Ascending aorta (tissue), 2 donors: ENCODE measurements at regions of chr3 and their contacts with region 1.

Region 1: GRCh38 chr3:185070491-185071286 is 82.2 kb downstream of the C3orf70 start:
- DNase-seq: no peak
- H3K4me3 ChIP-seq: no peak overlapping the region
- H3K27ac ChIP-seq: no peak overlapping the region
- H3K4me1 ChIP-seq: no peaks in the 10 kb centered on the region
- H3K27me3 ChIP-seq: no peaks in the 10 kb centered on the region
- CTCF ChIP-seq: no peak

Region 2: GRCh38 chr3:184679056-184679816 is 391.5 kb before region 1 on chr3:
- intact Hi-C with region 1: no loop called
- DNase-seq: no peak
- H3K4me3 ChIP-seq: peak overlapping the region in 1 of 2 donors; percentile 43
- H3K27ac ChIP-seq: no peak overlapping the region
- H3K4me1 ChIP-seq: no peaks in the 10 kb centered on the region
- H3K27me3 ChIP-seq: no peaks in the 10 kb centered on the region
- CTCF ChIP-seq: no peak

Region 3: DNA sequence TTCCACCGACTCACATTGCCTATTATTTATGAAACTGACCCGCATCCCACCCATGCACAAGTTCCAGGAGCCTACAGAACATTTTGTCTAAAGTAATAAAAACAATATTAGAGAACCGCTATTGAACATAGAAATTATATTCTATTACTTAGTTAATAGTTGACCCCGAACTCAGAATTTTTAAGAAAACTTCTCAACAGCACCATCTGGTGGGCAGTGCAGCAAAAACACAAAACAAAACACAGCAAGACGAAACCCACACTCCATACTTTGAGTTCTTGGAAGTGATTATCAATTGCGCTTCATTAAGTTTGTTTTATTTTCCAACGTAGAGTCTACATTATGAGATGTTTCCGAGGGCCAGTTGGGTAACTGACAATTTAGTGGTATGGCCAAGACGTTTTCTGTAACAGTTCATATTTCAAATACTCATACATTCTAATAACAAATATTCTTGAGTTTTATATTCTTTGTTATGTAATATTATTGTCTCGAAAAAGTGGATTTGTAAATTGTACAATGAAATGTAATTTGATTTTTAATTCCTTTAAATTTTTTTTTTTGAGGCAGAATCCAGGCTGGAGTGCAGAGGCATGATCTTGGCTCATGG is 106.2 kb after region 1 on chr3:
- intact Hi-C with region 1: loop called (anchors 5 kb)
- DNase-seq: no peak
- H3K4me3 ChIP-seq: no peak overlapping the region
- H3K27ac ChIP-seq: no peak overlapping the region
- H3K4me1 ChIP-seq: no peaks in the 10 kb centered on the region
- H3K27me3 ChIP-seq: no peaks in the 10 kb centered on the region
- CTCF ChIP-seq: peak; percentile 38 to 63 (median 63)